CD8-positive, alpha-beta T cell (primary cell): ENCODE measurements at regions of chr11 and their contacts with region 1.

Region 1: DNA sequence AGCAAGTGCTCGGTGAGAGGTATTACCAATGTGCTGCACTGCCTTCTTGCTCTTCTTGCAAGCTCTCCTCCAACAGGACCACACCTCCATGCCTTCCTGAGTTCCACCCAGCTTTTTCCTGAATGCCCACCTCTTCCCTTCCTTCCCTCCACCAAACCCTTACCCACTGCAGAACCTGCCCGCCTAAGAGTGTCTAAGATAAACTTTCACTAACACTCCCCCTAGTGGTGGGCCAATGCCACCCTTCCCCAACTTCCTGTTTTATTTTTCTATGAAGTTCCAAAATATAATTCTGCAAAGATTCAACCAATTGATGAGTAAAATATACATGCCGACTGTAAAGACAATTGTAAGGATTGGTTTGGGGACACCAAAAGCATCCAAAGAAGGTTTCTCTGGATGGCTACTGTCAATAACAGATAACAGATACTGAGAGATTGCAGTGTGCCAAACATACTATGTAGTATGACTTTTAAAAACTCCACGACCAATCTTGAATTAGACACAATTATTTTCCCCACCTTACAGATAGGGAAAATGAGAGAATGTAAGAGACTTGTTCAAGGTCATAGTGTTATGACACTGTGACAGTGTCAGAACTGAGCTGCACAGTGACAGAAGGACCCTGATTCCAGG is 38.6 kb upstream of the BMAL1 start:
- DNase-seq: peak; percentile 13 to 70 (median 56)
- ATAC-seq: peak; percentile 79
- H3K4me3 ChIP-seq: no peak overlapping the region
- H3K4me3 Mint-ChIP-seq: no peak overlapping the region
- H3K27ac ChIP-seq: no peak overlapping the region
- H3K27ac Mint-ChIP-seq: no peak overlapping the region
- H3K4me1 ChIP-seq: no peaks in the 10 kb centered on the region
- H3K4me1 Mint-ChIP-seq: peaks cover 1% of the 10 kb centered on the region
- H3K27me3 ChIP-seq: no peaks in the 10 kb centered on the region
- H3K27me3 Mint-ChIP-seq: peaks cover 13% of the 10 kb centered on the region
- CTCF ChIP-seq: peak; percentile 86

Region 2: GRCh38 chr11:12717851-12718291 is 521.1 kb before region 1 on chr11:
- CTCF ChIA-PET with region 1: no interaction called
- POLR2A ChIA-PET with region 1: no interaction called
- intact Hi-C with region 1: no loop called
- DNase-seq: peak in 7 of 9 experiments; percentile 7 to 81 (median 27)
- ATAC-seq: peak; percentile 95
- H3K4me3 ChIP-seq: peak overlapping the region in 1 of 2 experiments; percentile 5
- H3K4me3 Mint-ChIP-seq: no peak overlapping the region
- H3K27ac ChIP-seq: no peak overlapping the region
- H3K27ac Mint-ChIP-seq: no peak overlapping the region
- H3K4me1 ChIP-seq: peaks cover 19% of the 10 kb centered on the region
- H3K4me1 Mint-ChIP-seq: peaks cover 17% of the 10 kb centered on the region
- H3K27me3 ChIP-seq: peaks cover 4 to 16% of the 10 kb centered on the region in 2 experiments
- H3K27me3 Mint-ChIP-seq: peaks cover 66% of the 10 kb centered on the region
- CTCF ChIP-seq: no peak

Region 3: GRCh38 chr11:12900496-12900895 is 338.5 kb before region 1 on chr11:
- CTCF ChIA-PET with region 1: no interaction called
- POLR2A ChIA-PET with region 1: no interaction called
- intact Hi-C with region 1: no loop called
- DNase-seq: no peak
- ATAC-seq: no peak
- H3K4me3 ChIP-seq: no peak overlapping the region
- H3K4me3 Mint-ChIP-seq: no peak overlapping the region
- H3K27ac ChIP-seq: no peak overlapping the region
- H3K27ac Mint-ChIP-seq: no peak overlapping the region
- H3K4me1 ChIP-seq: no peaks in the 10 kb centered on the region
- H3K4me1 Mint-ChIP-seq: no peaks in the 10 kb centered on the region
- H3K27me3 ChIP-seq: no peaks in the 10 kb centered on the region
- H3K27me3 Mint-ChIP-seq: peaks cover 19% of the 10 kb centered on the region
- CTCF ChIP-seq: no peak

Region 4: DNA sequence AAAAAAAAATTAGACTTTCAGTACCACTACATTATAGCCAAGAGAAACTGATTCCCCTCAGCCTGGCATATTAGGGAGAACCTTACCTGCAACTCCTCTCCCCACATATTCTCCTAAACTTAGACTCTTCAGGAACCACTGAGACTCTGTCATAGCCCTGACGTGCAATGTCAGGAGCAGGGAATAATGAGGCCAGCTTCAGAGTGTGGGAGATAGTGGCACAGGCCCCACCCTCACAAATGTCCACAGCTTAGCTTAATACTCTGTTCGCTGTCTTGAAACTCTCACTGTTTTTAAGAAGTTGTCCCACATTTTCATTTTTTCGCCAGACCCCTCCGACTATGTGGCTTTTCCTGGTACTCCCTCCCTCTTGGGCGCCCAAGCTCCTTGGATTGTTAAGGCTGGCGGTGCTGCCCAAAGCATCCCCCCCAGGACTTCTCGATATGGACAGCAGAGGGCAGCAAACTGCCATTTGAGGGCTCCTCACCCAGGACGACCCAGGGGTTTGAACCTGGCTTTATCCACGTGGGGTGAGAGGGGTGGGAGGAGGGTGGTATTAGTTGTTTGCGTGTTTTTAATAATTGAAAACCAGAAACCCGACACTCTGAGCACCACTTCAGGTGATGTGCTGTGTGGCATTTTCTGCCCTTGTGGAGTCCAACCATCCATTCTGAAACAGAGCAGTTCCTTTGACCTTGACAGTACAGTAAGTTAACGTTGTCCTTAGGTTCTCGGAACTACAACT is 275.0 kb before region 1 on chr11:
- CTCF ChIA-PET with region 1: no interaction called
- POLR2A ChIA-PET with region 1: no interaction called
- intact Hi-C with region 1: loop called in 1 of 2 experiments (anchors 10 kb)
- DNase-seq: peak; percentile 11 to 69 (median 58)
- ATAC-seq: peak; percentile 58
- H3K4me3 ChIP-seq: no peak overlapping the region
- H3K4me3 Mint-ChIP-seq: no peak overlapping the region
- H3K27ac ChIP-seq: no peak overlapping the region
- H3K27ac Mint-ChIP-seq: no peak overlapping the region
- H3K4me1 ChIP-seq: no peaks in the 10 kb centered on the region
- H3K4me1 Mint-ChIP-seq: no peaks in the 10 kb centered on the region
- H3K27me3 ChIP-seq: peaks cover 0 to 3% of the 10 kb centered on the region in 2 experiments
- H3K27me3 Mint-ChIP-seq: peaks cover 30% of the 10 kb centered on the region
- CTCF ChIP-seq: peak; percentile 52

Region 5: GRCh38 chr11:13183094-13183825 is 55.7 kb before region 1 on chr11:
- CTCF ChIA-PET with region 1: no interaction called
- POLR2A ChIA-PET with region 1: no interaction called
- intact Hi-C with region 1: loop called (anchors 1 to 2 kb)
- DNase-seq: peak in 2 of 9 experiments; percentile 39 to 49
- ATAC-seq: no peak
- H3K4me3 ChIP-seq: no peak overlapping the region
- H3K4me3 Mint-ChIP-seq: no peak overlapping the region
- H3K27ac ChIP-seq: no peak overlapping the region
- H3K27ac Mint-ChIP-seq: no peak overlapping the region
- H3K4me1 ChIP-seq: peaks cover 4% of the 10 kb centered on the region
- H3K4me1 Mint-ChIP-seq: peaks cover 6% of the 10 kb centered on the region
- H3K27me3 ChIP-seq: peaks cover 0 to 3% of the 10 kb centered on the region in 2 experiments
- H3K27me3 Mint-ChIP-seq: peaks cover 19% of the 10 kb centered on the region
- CTCF ChIP-seq: peak; percentile 36

Region 6: DNA sequence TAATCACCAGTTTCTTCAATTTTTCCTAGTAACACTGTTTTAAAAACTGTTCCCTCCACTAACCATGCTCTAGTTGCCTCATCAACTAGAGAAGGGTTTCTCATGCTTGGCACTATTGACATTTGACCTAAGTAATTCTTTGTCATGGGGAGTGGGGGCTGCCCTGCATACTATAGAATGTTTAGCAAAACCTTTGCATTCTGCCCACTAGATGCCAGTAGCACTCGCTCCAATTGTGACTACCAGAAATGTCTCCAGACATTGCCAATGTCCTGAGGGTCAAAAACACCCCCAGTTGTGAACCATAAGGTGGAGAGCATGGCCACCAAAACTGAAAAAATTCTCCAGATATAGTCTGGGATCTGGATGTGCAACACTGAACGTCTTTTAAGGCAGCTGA is 11.0 kb after region 1 on chr11:
- CTCF ChIA-PET with region 1: interaction called, 11 read pairs
- POLR2A ChIA-PET with region 1: no interaction called
- intact Hi-C with region 1: no loop called
- DNase-seq: peak in 2 of 9 experiments; percentile 26 to 40
- ATAC-seq: no peak
- H3K4me3 ChIP-seq: no peak overlapping the region
- H3K4me3 Mint-ChIP-seq: no peak overlapping the region
- H3K27ac ChIP-seq: no peak overlapping the region
- H3K27ac Mint-ChIP-seq: no peak overlapping the region
- H3K4me1 ChIP-seq: no peaks in the 10 kb centered on the region
- H3K4me1 Mint-ChIP-seq: no peaks in the 10 kb centered on the region
- H3K27me3 ChIP-seq: no peaks in the 10 kb centered on the region
- H3K27me3 Mint-ChIP-seq: peaks cover 17% of the 10 kb centered on the region
- CTCF ChIP-seq: no peak

Region 7: GRCh38 chr11:13261591-13262061 is 22.6 kb after region 1 on chr11:
- CTCF ChIA-PET with region 1: interaction called, 11 read pairs
- POLR2A ChIA-PET with region 1: no interaction called
- intact Hi-C with region 1: no loop called
- DNase-seq: no peak
- ATAC-seq: no peak
- H3K4me3 ChIP-seq: no peak overlapping the region
- H3K4me3 Mint-ChIP-seq: no peak overlapping the region
- H3K27ac ChIP-seq: no peak overlapping the region
- H3K27ac Mint-ChIP-seq: no peak overlapping the region
- H3K4me1 ChIP-seq: no peaks in the 10 kb centered on the region
- H3K4me1 Mint-ChIP-seq: peaks cover 14% of the 10 kb centered on the region
- H3K27me3 ChIP-seq: no peaks in the 10 kb centered on the region
- H3K27me3 Mint-ChIP-seq: no peaks in the 10 kb centered on the region
- CTCF ChIP-seq: no peak